CD4-positive, alpha-beta memory T cell (primary cell): ENCODE measurements at regions of chr2 and their contacts with region 1.

Region 1: GRCh38 chr2:143259368-143259958 is 130.2 kb downstream of the ARHGAP15 start:
- DNase-seq: peak; percentile 71 to 78 (median 74)
- H3K4me3 ChIP-seq: peak overlapping the region; percentile 7 to 40
- H3K4me3 Mint-ChIP-seq: peak overlapping the region; percentile 74 to 87 (median 84)
- H3K27ac ChIP-seq: peak overlapping the region; percentile 56
- H3K27ac Mint-ChIP-seq: peak overlapping the region; percentile 73 to 99 (median 86)
- H3K4me1 ChIP-seq: peaks cover 98% of the 10 kb centered on the region
- H3K4me1 Mint-ChIP-seq: peaks cover 59 to 78% (median 70%) of the 10 kb centered on the region in 4 donors
- H3K27me3 ChIP-seq: no peaks in the 10 kb centered on the region
- H3K27me3 Mint-ChIP-seq: no peaks in the 10 kb centered on the region

Region 2: DNA sequence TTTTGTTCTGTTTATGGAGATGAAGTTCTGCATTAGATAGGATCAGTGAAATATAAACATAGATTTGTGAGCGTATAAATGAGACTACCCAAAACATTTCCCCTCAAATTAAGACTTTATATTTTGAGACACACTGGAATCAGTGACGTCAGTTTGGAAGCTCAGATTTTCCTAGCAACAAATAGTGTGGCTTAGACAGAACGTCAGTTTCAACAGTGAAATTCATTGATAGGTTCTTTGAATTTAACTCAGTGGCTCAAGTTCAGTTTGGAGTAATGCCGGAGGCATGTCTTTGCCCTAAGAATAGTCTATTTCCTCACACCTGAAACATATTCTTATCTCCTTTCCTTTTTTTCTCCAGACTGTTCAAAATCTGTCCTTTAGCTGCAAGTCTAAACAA is 243.8 kb before region 1 on chr2:
- CTCF ChIA-PET with region 1: no interaction called
- POLR2A ChIA-PET with region 1: no interaction called
- intact Hi-C with region 1: no loop called
- DNase-seq: no peak
- H3K4me3 ChIP-seq: no peak overlapping the region
- H3K4me3 Mint-ChIP-seq: peak overlapping the region in 1 of 8 donors; percentile 36
- H3K27ac ChIP-seq: no peak overlapping the region
- H3K27ac Mint-ChIP-seq: peak overlapping the region in 1 of 7 donors; percentile 22
- H3K4me1 ChIP-seq: no peaks in the 10 kb centered on the region
- H3K4me1 Mint-ChIP-seq: peaks cover 0 to 3% (median 1%) of the 10 kb centered on the region in 4 donors
- H3K27me3 ChIP-seq: no peaks in the 10 kb centered on the region
- H3K27me3 Mint-ChIP-seq: peaks cover 0 to 2% of the 10 kb centered on the region in 2 donors

Region 3: GRCh38 chr2:143110758-143111428 is 148.6 kb before region 1 on chr2:
- CTCF ChIA-PET with region 1: interaction called, 102 read pairs
- POLR2A ChIA-PET with region 1: interaction called, 35 read pairs
- intact Hi-C with region 1: loop called (anchors 1 kb)
- DNase-seq: peak; percentile 59 to 72 (median 67)
- H3K4me3 ChIP-seq: no peak overlapping the region
- H3K4me3 Mint-ChIP-seq: peak overlapping the region in 5 of 8 donors; percentile 17 to 53 (median 42)
- H3K27ac ChIP-seq: peak overlapping the region; percentile 33
- H3K27ac Mint-ChIP-seq: peak overlapping the region in 6 of 7 donors; percentile 63 to 89 (median 74)
- H3K4me1 ChIP-seq: peaks cover 20% of the 10 kb centered on the region
- H3K4me1 Mint-ChIP-seq: peaks cover 17 to 25% (median 21%) of the 10 kb centered on the region in 4 donors
- H3K27me3 ChIP-seq: no peaks in the 10 kb centered on the region
- H3K27me3 Mint-ChIP-seq: no peaks in the 10 kb centered on the region

Region 4: DNA sequence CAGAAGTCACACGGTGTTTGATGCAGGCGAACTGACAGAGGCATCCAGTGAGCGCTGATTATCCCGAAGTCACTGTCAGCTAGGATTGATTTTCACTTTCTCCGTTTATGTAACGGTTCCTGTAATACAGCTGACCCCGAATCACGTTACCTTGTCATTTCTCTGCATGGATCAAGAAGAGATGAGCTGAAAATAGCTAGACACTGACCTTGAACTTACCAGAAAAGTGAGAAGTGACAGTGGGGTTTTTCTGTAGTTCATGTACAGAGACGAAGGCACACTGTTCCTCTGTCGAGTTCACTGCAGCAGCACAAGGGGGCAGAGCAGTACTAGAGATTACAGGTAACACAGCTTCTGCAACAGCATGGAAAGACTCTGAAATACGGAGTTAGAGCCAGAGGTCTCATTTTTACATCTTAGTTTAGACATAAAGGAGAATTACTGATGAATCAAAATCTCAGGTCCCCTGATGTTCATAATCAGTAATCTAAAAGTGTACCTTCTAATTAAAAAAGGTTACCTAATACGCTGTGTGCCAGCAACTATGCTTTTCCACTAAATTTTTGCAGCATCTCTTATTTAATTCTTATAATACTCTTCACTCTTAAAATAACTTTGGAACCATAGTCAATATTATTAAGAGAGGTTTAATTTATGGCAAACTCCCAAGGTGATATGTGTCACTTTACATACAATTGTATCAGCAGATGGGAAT is 97.2 kb before region 1 on chr2:
- CTCF ChIA-PET with region 1: interaction called, 227 read pairs
- POLR2A ChIA-PET with region 1: interaction called, 90 read pairs
- intact Hi-C with region 1: loop called (anchors 1 kb)
- DNase-seq: peak; percentile 62 to 78 (median 71)
- H3K4me3 ChIP-seq: no peak overlapping the region
- H3K4me3 Mint-ChIP-seq: peak overlapping the region in 4 of 8 donors; percentile 1 to 27 (median 6)
- H3K27ac ChIP-seq: no peak overlapping the region
- H3K27ac Mint-ChIP-seq: peak overlapping the region; percentile 30 to 90 (median 78)
- H3K4me1 ChIP-seq: peaks cover 83% of the 10 kb centered on the region
- H3K4me1 Mint-ChIP-seq: peaks cover 70 to 92% (median 82%) of the 10 kb centered on the region in 4 donors
- H3K27me3 ChIP-seq: no peaks in the 10 kb centered on the region
- H3K27me3 Mint-ChIP-seq: no peaks in the 10 kb centered on the region

Region 5: GRCh38 chr2:143193121-143193520 is 66.3 kb before region 1 on chr2:
- CTCF ChIA-PET with region 1: interaction called, 13 read pairs
- POLR2A ChIA-PET with region 1: no interaction called
- intact Hi-C with region 1: no loop called
- DNase-seq: no peak
- H3K4me3 ChIP-seq: no peak overlapping the region
- H3K4me3 Mint-ChIP-seq: no peak overlapping the region
- H3K27ac ChIP-seq: no peak overlapping the region
- H3K27ac Mint-ChIP-seq: peak overlapping the region in 4 of 7 donors; percentile 32 to 65 (median 56)
- H3K4me1 ChIP-seq: peaks cover 16% of the 10 kb centered on the region
- H3K4me1 Mint-ChIP-seq: peaks cover 38 to 63% (median 52%) of the 10 kb centered on the region in 4 donors
- H3K27me3 ChIP-seq: no peaks in the 10 kb centered on the region
- H3K27me3 Mint-ChIP-seq: no peaks in the 10 kb centered on the region

Region 6: DNA sequence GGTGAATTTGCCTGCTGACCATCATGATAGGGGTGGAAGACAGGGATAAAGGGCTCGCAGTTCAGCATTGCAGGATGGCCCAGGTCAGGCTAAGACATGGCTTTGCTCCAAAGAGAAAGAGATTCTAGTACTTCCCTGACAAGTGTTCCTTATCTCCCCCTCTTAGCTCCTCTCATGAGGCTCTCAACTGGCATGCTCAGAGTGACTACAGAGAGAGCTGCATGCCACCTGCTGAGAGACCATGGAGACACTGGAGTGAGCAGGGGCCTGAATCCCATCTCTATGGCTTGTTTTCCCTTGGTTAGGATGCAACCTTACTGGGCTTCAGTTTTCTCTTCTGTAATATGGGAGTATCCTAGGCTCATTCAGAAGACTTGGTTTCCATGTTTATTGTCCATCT is 35.9 kb before region 1 on chr2:
- CTCF ChIA-PET with region 1: interaction called, 112 read pairs
- POLR2A ChIA-PET with region 1: interaction called, 46 read pairs
- intact Hi-C with region 1: loop called (anchors 1 kb)
- DNase-seq: no peak
- H3K4me3 ChIP-seq: no peak overlapping the region
- H3K4me3 Mint-ChIP-seq: peak overlapping the region in 2 of 8 donors; percentile 20 to 34
- H3K27ac ChIP-seq: no peak overlapping the region
- H3K27ac Mint-ChIP-seq: peak overlapping the region in 4 of 7 donors; percentile 63 to 75 (median 70)
- H3K4me1 ChIP-seq: peaks cover 70% of the 10 kb centered on the region
- H3K4me1 Mint-ChIP-seq: peaks cover 44 to 69% (median 58%) of the 10 kb centered on the region in 4 donors
- H3K27me3 ChIP-seq: no peaks in the 10 kb centered on the region
- H3K27me3 Mint-ChIP-seq: no peaks in the 10 kb centered on the region

Region 7: DNA sequence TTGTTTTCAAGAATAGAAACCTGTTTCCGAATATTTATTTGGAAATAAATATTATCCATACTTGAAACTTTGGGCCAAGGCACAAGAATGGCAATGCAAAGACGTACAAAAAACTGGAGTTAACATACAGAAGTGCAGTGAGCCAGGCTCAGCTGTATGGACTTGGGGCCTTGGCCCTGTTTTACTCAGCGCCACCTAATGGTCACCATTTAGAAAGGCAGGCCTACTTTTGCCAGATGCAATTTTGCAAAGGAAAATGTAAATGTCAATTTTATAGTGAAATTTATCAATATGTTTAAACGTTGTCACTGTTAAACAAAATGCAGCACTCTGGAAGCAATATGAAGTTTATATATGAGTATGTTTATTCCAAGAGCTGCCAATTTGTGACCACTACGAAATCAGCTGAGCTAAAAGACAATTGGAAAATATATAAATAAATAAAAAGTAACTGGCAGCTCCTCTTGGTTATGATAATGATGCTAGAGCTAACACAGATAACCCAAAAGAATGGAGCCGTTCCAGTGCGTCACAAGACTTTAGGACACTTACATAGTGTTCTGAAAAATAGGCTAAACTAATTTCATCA is 24.7 kb after region 1 on chr2:
- CTCF ChIA-PET with region 1: interaction called, 23 read pairs
- POLR2A ChIA-PET with region 1: interaction called, 3 read pairs
- intact Hi-C with region 1: no loop called
- DNase-seq: peak; percentile 31 to 46 (median 35)
- H3K4me3 ChIP-seq: no peak overlapping the region
- H3K4me3 Mint-ChIP-seq: peak overlapping the region in 1 of 8 donors; percentile 32
- H3K27ac ChIP-seq: no peak overlapping the region
- H3K27ac Mint-ChIP-seq: peak overlapping the region; percentile 18 to 83 (median 53)
- H3K4me1 ChIP-seq: peaks cover 26% of the 10 kb centered on the region
- H3K4me1 Mint-ChIP-seq: peaks cover 42 to 82% (median 57%) of the 10 kb centered on the region in 4 donors
- H3K27me3 ChIP-seq: no peaks in the 10 kb centered on the region
- H3K27me3 Mint-ChIP-seq: no peaks in the 10 kb centered on the region